ENCODE measurements at regions of chr1 and their contacts with region 1.

Region 1: GRCh38 chr1:182781841-182782586 is 7.6 kb upstream of the NPL start:
- DNase-seq: peak; percentile 82
- H3K4me3 Mint-ChIP-seq: no peak overlapping the region
- H3K27ac Mint-ChIP-seq: no peak overlapping the region
- H3K4me1 Mint-ChIP-seq: peaks cover 19% of the 10 kb centered on the region
- H3K27me3 Mint-ChIP-seq: no peaks in the 10 kb centered on the region
- CTCF ChIP-seq: peak; percentile 76

Region 2: DNA sequence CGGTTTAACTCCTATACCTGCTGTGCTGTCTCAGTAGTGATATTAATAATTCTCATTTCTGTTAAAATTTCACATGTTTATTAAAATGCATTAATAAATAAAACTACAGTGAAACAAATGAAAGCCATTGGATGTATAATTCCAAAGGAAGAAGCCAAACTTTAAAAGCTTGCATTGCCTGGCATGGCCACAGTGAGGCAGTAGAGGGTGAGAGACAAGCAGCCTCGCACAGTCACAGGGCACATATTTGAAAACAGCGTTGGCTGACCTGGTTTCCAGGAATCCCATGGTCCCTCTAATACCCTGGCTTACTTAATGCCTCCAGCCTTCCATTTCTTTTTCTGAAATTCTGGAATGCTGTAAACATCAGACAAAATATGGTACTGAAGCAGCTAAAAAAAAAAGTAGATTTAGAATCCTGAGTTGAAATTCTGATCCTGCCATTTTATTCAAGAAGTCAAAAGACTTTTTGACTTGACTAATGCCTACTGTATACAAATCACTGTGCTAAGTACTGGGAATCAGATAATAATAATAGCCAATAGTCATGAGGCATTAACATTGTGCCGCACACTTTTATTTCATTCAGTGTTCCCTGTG is 186.3 kb before region 1 on chr1:
- CTCF ChIA-PET with region 1: interaction called, 991 read pairs
- POLR2A ChIA-PET with region 1: interaction called, 151 read pairs
- intact Hi-C with region 1: loop called (anchors 1 kb)
- DNase-seq: peak; percentile 80
- H3K4me3 Mint-ChIP-seq: no peak overlapping the region
- H3K27ac Mint-ChIP-seq: no peak overlapping the region
- H3K4me1 Mint-ChIP-seq: peaks cover 6% of the 10 kb centered on the region
- H3K27me3 Mint-ChIP-seq: no peaks in the 10 kb centered on the region
- CTCF ChIP-seq: peak; percentile 92

Region 3: DNA sequence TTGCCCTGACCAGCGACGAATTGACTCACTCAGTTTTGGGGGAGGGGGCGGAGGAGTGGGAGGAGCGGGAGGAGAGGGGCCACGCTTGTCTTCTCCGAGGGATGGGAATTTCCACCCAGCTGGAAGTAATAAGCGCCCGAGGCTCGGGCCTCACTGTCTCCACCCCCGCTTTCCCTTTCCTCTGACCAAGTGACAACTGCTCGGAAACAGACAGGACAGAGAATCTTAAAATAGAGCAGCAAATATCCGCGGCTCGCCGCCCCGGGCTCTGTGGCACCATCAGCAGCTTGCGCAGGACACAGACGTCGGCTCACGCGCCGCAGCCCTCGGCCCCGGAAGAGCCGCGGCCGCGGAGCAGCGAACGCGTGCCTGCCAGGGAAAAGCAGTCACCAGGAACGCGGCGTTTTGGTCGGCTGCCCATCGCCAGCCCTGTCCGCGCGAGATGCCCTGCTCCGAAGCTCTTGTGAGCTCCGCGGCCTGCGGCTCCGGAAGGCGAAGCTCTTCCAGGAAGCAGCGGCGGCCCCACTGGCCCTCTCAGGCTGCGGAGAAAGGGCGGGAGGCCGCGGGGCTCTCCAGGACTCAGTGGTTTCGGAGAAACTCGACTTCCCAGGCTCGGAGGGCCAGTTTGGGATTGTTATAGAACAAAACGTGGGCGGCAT is 167.1 kb before region 1 on chr1:
- CTCF ChIA-PET with region 1: interaction called, 991 read pairs
- POLR2A ChIA-PET with region 1: interaction called, 4 read pairs
- intact Hi-C with region 1: loop called (anchors 1 kb)
- DNase-seq: peak; percentile 88
- H3K4me3 Mint-ChIP-seq: peak overlapping the region; percentile 63
- H3K27ac Mint-ChIP-seq: no peak overlapping the region
- H3K4me1 Mint-ChIP-seq: peaks cover 44% of the 10 kb centered on the region
- H3K27me3 Mint-ChIP-seq: no peaks in the 10 kb centered on the region
- CTCF ChIP-seq: no peak

Region 4: GRCh38 chr1:182761396-182762395 is 20.3 kb before region 1 on chr1:
- CTCF ChIA-PET with region 1: interaction called, 40 read pairs
- POLR2A ChIA-PET with region 1: no interaction called
- intact Hi-C with region 1: no loop called
- DNase-seq: peak; percentile 46
- H3K4me3 Mint-ChIP-seq: no peak overlapping the region
- H3K27ac Mint-ChIP-seq: peak overlapping the region; percentile 93
- H3K4me1 Mint-ChIP-seq: peaks cover 7% of the 10 kb centered on the region
- H3K27me3 Mint-ChIP-seq: no peaks in the 10 kb centered on the region
- CTCF ChIP-seq: no peak

Region 5: GRCh38 chr1:182795563-182796228 is 13.7 kb after region 1 on chr1:
- CTCF ChIA-PET with region 1: interaction called, 33 read pairs
- POLR2A ChIA-PET with region 1: interaction called, 5 read pairs
- intact Hi-C with region 1: no loop called
- DNase-seq: no peak
- H3K4me3 Mint-ChIP-seq: no peak overlapping the region
- H3K27ac Mint-ChIP-seq: no peak overlapping the region
- H3K4me1 Mint-ChIP-seq: no peaks in the 10 kb centered on the region
- H3K27me3 Mint-ChIP-seq: no peaks in the 10 kb centered on the region
- CTCF ChIP-seq: no peak

Measured in MCF 10A (cell line).